ENCODE measurements at regions of chr22 and their contacts with region 1.

Region 1: GRCh38 chr22:39309881-39310714 is 9.3 kb downstream of the RPL3 start:
- DNase-seq: no peak
- H3K4me3 ChIP-seq: no peak overlapping the region
- CTCF ChIP-seq: no peak
- POLR2A ChIP-seq: no peak

Region 2: DNA sequence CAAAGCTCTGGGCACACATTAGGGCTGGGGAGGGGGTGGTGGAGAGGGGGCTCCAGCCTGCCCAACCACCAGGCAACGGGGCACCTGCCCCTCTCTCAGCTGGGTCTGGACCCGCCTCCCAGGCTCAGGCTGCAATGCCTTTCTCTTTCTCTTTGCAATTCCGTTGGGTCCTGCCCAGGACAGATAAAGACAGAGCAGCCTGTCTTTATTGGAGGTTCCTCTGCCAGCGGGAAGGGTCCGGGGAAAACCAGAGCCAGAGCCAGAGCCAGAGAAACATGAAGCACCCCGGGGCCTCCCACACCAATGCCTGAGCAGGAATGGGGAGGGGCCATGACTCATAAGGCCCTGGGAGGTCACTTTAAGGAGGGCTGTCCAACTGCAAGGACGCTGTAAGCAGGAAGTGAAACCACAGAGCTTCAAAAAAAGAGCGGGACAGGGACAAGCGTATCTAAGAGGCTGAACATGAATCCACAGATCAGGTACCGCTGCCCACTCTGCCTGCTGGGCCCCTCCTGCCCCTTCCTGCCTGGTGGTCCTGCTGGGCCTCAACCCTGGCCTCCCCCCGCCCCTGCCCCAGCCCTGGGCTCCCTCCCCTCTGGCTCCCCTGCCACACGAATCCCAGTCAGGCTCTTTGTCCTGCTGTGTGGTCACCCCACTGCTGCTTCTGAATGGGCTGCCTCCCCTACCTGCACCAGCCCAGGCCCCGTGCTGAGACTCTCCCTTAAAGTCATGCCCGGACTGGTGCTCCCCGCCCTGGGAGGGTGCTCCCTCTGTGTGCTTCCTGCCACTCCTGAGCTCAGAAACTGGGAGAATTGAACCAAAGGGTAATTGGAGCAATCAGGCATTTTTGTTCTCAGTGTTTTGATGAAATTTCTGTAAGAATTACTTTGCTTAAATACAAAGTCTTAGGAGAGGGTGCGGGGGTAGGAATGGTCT is 327.8 kb before region 1 on chr22 and contains the start of gene APOBEC3B:
- intact Hi-C with region 1: no loop called
- DNase-seq: peak; percentile 89 to 95
- H3K4me3 ChIP-seq: peak within 1 kb of the TSS; percentile 25
- CTCF ChIP-seq: no peak
- POLR2A ChIP-seq: no peak
- total RNA-seq, gene APOBEC3B: 0.15 to 2.4 (median 0.21) TPM in 3 of 4 donors, not detected in the other

Region 3: GRCh38 chr22:39170825-39171622 is 139.1 kb before region 1 on chr22:
- intact Hi-C with region 1: loop called (anchors 2 kb)
- DNase-seq: peak; percentile 70 to 97
- H3K4me3 ChIP-seq: no peak overlapping the region
- CTCF ChIP-seq: peak in 2 of 3 donors; percentile 62 to 89
- POLR2A ChIP-seq: no peak

Region 4: DNA sequence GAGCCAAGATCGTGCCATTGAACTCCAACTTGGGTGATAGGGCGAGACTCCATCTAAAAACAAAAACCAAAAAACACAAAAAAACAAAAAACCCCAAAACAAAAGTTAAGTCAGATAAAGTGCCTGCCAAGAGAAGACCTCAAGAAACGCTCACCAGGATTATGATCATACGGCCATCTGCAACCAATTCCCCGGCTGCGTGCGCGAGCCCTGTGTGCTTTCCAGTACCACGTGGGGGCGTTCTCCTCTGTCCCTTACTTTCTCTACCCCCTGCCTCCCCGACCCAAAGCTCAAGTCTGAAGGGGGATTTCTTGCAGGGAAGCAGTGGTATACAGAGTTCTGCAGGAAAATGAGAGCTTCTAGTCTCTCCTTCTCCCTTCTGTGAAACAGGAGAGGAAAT is 233.0 kb after region 1 on chr22:
- intact Hi-C with region 1: no loop called
- DNase-seq: no peak
- H3K4me3 ChIP-seq: no peak overlapping the region
- CTCF ChIP-seq: no peak
- POLR2A ChIP-seq: no peak